ENCODE measurements at regions of chr7 and their contacts with region 1.

Region 1: GRCh38 chr7:127392566-127393367 is at the start of gene ZNF800:
- DNase-seq: peak; percentile 86 to 89 (median 87)
- H3K4me3 ChIP-seq: peak within 1 kb of the TSS; percentile 83
- H3K27ac ChIP-seq: peak within 1 kb of the TSS; percentile 87 to 95
- H3K4me1 ChIP-seq: peaks cover 2% of the 10 kb centered on the region
- H3K27me3 ChIP-seq: no peaks in the 10 kb centered on the region
- CTCF ChIP-seq: peak in 1 of 3 donors; percentile 6
- EP300 ChIP-seq: no peak
- POLR2A ChIP-seq: peak; percentile 80
- total RNA-seq, gene ZNF800: 22.3 to 36.2 (median 31.0) TPM

Region 2: DNA sequence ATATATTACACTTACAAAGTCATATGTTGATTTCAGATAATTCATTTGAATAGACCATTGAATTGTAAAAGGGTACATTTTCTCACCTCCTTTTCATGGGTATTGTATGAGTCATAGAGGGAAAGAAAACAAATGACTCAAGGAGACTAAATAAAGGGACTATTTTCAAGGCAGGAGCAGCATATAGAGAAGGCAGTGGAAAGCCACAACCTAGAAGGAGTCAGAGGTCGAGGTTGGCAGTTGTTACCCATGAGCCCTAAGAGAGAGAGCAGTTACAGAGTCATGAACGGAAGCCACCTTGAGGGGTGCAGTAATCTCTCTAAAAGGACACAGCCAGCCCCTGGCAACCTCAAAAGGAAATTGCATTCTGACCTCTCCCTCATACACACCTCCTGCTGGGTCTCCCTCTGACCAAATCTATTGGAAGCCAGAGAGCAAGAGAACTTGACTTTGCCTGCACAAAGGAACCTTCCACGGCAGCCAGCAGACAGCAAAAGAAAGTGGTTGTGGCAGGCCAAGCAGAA is 278.0 kb before region 1 on chr7:
- intact Hi-C with region 1: no loop called
- DNase-seq: no peak
- H3K4me3 ChIP-seq: no peak overlapping the region
- H3K27ac ChIP-seq: no peak overlapping the region
- H3K4me1 ChIP-seq: no peaks in the 10 kb centered on the region
- H3K27me3 ChIP-seq: no peaks in the 10 kb centered on the region
- CTCF ChIP-seq: no peak
- EP300 ChIP-seq: no peak
- POLR2A ChIP-seq: no peak

Region 3: DNA sequence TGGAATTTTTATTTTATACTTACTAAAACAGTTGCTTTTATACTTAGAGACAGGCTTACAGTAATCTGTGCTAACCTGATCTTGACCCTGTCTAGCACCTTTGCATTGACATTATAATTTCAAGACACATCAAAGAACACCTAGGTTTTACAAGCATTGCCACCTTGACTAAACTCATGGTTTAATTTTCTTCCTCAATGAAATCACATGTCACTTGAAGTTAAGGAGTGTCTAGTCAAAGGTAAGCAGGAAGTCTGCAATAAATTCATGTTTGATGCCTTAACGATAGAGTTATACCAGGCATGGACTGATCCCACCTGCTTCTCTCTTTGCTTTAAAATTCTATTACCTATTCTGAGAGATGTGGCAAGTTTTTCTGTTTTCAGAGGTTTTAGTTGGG is 62.7 kb before region 1 on chr7:
- intact Hi-C with region 1: no loop called
- DNase-seq: no peak
- H3K4me3 ChIP-seq: no peak overlapping the region
- H3K27ac ChIP-seq: no peak overlapping the region
- H3K4me1 ChIP-seq: no peaks in the 10 kb centered on the region
- H3K27me3 ChIP-seq: no peaks in the 10 kb centered on the region
- CTCF ChIP-seq: no peak
- EP300 ChIP-seq: no peak
- POLR2A ChIP-seq: no peak

Region 4: DNA sequence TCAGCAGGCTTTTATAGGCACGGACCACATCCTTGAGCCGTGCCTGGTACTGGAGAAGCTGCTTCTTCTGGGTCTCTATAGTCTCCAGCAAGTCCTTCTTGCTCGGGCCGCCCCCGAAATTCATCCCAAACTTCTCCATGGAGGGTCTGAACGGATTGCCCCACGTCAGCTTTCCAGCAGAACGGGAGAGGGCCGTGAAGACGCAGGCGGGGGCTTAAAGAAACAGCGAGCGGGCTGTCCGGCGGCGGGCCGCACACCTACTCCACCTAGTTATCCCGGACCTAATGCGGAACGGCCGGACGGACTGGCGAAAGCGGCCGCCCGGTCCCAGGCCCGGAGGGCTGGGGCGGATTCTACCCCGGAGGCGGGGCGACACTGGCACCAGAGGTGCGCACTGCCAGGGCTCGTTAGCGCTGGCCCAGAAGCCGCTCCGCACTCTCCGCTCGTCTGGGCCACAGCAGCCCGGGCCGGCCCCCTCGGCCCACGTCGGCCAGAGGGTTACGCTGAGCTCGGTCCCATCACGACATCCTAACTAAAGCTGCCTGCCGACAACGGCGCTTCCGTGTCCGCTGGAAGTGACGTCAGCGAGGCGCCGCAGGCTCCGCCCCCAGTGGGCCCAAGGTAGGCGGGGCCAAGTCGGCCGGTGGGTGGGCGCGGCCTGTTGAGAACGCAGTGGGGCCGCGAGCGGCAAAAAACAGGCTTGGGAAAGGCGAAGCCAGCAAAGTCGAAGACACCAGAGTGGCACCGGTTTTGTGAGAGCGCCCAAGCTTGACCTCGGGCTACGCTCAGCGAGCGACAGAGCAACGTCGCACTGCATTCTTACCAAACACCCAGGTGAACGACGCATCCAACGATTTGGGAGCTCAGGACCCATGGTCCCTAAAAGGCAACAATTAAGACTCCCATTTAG is 192.5 kb after region 1 on chr7 and contains the start of gene GCC1:
- intact Hi-C with region 1: loop called in 2 of 4 experiments (anchors 5 to 10 kb)
- DNase-seq: peak; percentile 92 to 99 (median 96)
- H3K4me3 ChIP-seq: peak within 1 kb of the TSS; percentile 60
- H3K27ac ChIP-seq: peak within 1 kb of the TSS; percentile 62 to 86
- H3K4me1 ChIP-seq: peaks cover 16% of the 10 kb centered on the region
- H3K27me3 ChIP-seq: no peaks in the 10 kb centered on the region
- CTCF ChIP-seq: no peak
- EP300 ChIP-seq: no peak
- POLR2A ChIP-seq: peak; percentile 88
- total RNA-seq, gene GCC1: 12.1 to 21.1 (median 16.0) TPM

Region 5: GRCh38 chr7:127651556-127652332 is 259.0 kb after region 1 on chr7 and contains the start of gene SND1:
- intact Hi-C with region 1: loop called in 1 of 4 experiments (anchors 10 kb)
- DNase-seq: peak; percentile 98 to 100 (median 99)
- H3K4me3 ChIP-seq: peak within 1 kb of the TSS; percentile 81
- H3K27ac ChIP-seq: peak within 1 kb of the TSS; percentile 87 to 95
- H3K4me1 ChIP-seq: peaks cover 11% of the 10 kb centered on the region
- H3K27me3 ChIP-seq: no peaks in the 10 kb centered on the region
- CTCF ChIP-seq: no peak
- EP300 ChIP-seq: peak; percentile 81
- POLR2A ChIP-seq: peak; percentile 81
- total RNA-seq, gene SND1: 93.6 to 271 (median 182) TPM